ENCODE measurements at regions of chr13 and their contacts with region 1.

Region 1: GRCh38 chr13:108895220-108895704 is 265.9 kb downstream of the MYO16 start:
- DNase-seq: no peak
- ATAC-seq: no peak
- H3K4me3 ChIP-seq: no peak overlapping the region
- H3K27ac ChIP-seq: no peak overlapping the region
- H3K4me1 ChIP-seq: no peaks in the 10 kb centered on the region
- H3K27me3 ChIP-seq: peaks cover 0 to 5% (median 0%) of the 10 kb centered on the region in 3 donors
- CTCF ChIP-seq: peak in 2 of 5 experiments; percentile 43 to 46
- POLR2A ChIP-seq: no peak

Region 2: GRCh38 chr13:108322206-108322824 is 572.9 kb before region 1 on chr13:
- in situ Hi-C with region 1: loop called in 2 of 4 experiments (anchors 10 to 25 kb)
- intact Hi-C with region 1: loop called (anchors 5 kb)
- DNase-seq: no peak
- ATAC-seq: peak; percentile 33 to 41
- H3K4me3 ChIP-seq: no peak overlapping the region
- H3K27ac ChIP-seq: no peak overlapping the region
- H3K4me1 ChIP-seq: no peaks in the 10 kb centered on the region
- H3K27me3 ChIP-seq: no peaks in the 10 kb centered on the region
- CTCF ChIP-seq: peak; percentile 18 to 64 (median 27)
- POLR2A ChIP-seq: no peak

Region 3: GRCh38 chr13:108342369-108343289 is 552.6 kb before region 1 on chr13:
- in situ Hi-C with region 1: loop called in 1 of 4 experiments (anchors 25 kb)
- intact Hi-C with region 1: no loop called
- DNase-seq: no peak
- ATAC-seq: no peak
- H3K4me3 ChIP-seq: no peak overlapping the region
- H3K27ac ChIP-seq: no peak overlapping the region
- H3K4me1 ChIP-seq: no peaks in the 10 kb centered on the region
- H3K27me3 ChIP-seq: no peaks in the 10 kb centered on the region
- CTCF ChIP-seq: no peak
- POLR2A ChIP-seq: no peak

Region 4: DNA sequence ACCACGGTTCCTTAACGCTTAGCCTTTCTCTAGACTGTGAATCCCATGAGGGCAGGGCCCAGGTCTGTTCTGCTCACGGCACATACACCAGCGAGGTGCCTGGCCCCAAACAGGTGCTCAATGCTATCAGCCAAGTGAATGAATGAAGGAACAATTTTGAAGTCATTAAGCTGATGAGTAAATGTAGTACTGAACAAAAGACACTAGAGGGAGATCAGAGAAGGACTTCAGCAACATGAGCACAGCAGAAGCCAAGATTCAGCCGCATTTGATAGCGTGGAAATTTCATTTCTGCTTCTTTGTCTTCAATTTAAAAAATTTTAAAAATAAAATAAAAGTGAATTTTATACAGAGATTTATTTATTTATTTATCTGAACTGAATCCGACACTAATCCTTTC is 285.9 kb before region 1 on chr13:
- in situ Hi-C with region 1: loop called in 1 of 4 experiments (anchors 25 kb)
- intact Hi-C with region 1: no loop called
- DNase-seq: no peak
- ATAC-seq: no peak
- H3K4me3 ChIP-seq: no peak overlapping the region
- H3K27ac ChIP-seq: no peak overlapping the region
- H3K4me1 ChIP-seq: no peaks in the 10 kb centered on the region
- H3K27me3 ChIP-seq: no peaks in the 10 kb centered on the region
- CTCF ChIP-seq: peak in 1 of 5 experiments; percentile 31
- POLR2A ChIP-seq: no peak

Measured in gastrocnemius medialis (tissue), 4 donors.